Activated naive CD4-positive, alpha-beta T cell treated with anti-CD3 and anti-CD28 coated beads for 36 hours (primary cell): ENCODE measurements at regions of chr16 and their contacts with region 1.

Region 1: DNA sequence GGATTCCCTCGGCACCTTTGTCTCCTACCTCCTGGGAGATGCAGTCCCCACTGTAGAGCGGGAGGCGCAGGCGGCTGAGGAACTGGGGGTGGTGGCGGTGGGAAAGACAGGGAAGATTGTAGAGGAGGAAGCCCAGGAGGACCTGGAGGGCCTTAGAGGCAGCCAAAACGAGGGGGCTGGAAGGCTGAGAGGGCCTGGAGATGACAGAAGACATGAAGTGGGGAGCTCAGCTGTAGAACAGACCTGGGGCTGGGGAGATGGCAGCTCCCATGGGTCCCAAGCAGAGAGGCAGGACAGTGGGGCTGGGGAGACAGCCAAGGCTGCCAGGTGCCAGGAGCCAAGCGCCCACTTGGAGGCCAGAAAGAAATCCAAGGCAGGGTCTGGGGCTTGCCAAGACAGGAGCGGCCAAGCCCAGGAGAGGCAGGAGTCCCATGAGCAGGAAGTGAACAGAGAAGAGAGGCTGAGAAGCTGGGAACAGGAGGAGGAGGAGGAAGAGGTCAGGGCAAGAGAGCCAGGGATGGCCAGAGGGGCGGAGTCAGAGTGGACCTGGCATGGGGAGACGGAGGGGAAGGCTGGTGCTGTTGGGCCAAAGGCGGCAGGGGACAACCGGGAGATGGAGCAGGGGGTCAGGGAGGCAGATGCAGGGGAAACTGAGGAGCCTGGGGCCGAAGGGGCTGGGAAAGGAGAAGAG is 800 bp downstream of the APOBR start:
- DNase-seq: no peak
- H3K4me3 Mint-ChIP-seq: peak overlapping the region; percentile 97
- H3K27ac Mint-ChIP-seq: peak overlapping the region; percentile 99
- H3K4me1 Mint-ChIP-seq: peaks cover 45% of the 10 kb centered on the region
- H3K27me3 Mint-ChIP-seq: no peaks in the 10 kb centered on the region

Region 2: DNA sequence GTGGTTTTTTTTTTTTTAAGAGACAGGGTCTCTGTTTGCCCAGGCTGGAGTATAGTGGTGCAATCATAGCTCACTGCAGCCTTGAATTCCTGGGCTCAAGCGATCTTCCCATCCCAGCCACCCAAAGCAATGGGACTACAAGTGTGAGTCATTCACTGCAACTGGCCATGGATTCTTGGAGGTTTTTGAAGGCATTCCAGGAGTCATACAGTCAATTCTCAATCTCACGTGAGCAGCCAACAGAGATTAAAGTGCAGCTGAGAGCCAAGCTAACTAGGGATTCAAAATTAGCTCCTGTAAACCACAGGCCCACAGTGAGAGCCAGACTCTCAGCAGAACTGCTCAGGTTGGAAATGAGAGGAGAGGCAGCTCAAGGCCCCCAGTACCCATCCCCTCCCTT is 313.7 kb before region 1 on chr16:
- CTCF ChIA-PET with region 1: no interaction called
- intact Hi-C with region 1: no loop called
- DNase-seq: no peak
- H3K4me3 Mint-ChIP-seq: no peak overlapping the region
- H3K27ac Mint-ChIP-seq: peak overlapping the region; percentile 91
- H3K4me1 Mint-ChIP-seq: peaks cover 80% of the 10 kb centered on the region
- H3K27me3 Mint-ChIP-seq: no peaks in the 10 kb centered on the region

Region 3: DNA sequence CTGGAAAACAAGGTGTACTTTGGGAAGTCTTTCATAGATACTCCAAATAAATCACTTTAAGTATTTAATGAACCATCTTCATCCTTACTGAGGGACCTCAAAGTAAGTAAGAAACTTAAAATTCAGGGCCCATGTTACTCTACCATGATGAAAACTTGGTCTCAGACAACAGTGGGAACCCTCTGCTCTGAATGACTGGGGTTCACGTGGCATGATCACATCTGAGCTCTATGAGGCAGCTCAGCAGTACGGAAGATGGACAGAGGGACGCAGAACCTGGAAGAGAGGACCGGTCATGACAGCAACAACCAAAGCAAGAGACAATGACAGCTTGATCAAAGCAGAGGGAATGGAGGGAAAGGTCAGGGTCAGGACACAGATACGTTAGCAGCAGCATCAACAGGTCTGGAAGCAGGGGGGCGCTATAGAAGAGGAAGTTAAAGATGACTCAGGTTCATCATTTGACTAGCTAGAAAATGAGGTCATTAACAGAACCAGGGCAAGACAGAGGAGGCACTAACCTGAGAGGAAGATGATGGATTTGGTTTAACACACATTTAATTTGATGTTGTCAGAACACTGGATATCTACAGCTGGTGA is 293.0 kb before region 1 on chr16:
- CTCF ChIA-PET with region 1: no interaction called
- intact Hi-C with region 1: no loop called
- DNase-seq: peak; percentile 82
- H3K4me3 Mint-ChIP-seq: peak overlapping the region; percentile 12
- H3K27ac Mint-ChIP-seq: no peak overlapping the region
- H3K4me1 Mint-ChIP-seq: peaks cover 29% of the 10 kb centered on the region
- H3K27me3 Mint-ChIP-seq: no peaks in the 10 kb centered on the region

Region 4: GRCh38 chr16:28538733-28539596 is 43.7 kb after region 1 on chr16 and contains the start of gene NUPR1:
- CTCF ChIA-PET with region 1: no interaction called
- intact Hi-C with region 1: loop called (anchors 5 kb)
- DNase-seq: no peak
- H3K4me3 Mint-ChIP-seq: no peak within 1 kb of the TSS
- H3K27ac Mint-ChIP-seq: no peak within 1 kb of the TSS
- H3K4me1 Mint-ChIP-seq: peaks cover 30% of the 10 kb centered on the region
- H3K27me3 Mint-ChIP-seq: no peaks in the 10 kb centered on the region
- total RNA-seq, gene NUPR1: not detected

Region 5: GRCh38 chr16:28561557-28562187 is 66.4 kb after region 1 on chr16:
- CTCF ChIA-PET with region 1: no interaction called
- intact Hi-C with region 1: no loop called
- DNase-seq: no peak
- H3K4me3 Mint-ChIP-seq: no peak overlapping the region
- H3K27ac Mint-ChIP-seq: no peak overlapping the region
- H3K4me1 Mint-ChIP-seq: peaks cover 25% of the 10 kb centered on the region
- H3K27me3 Mint-ChIP-seq: no peaks in the 10 kb centered on the region